ENCODE measurements at regions of chr12 and their contacts with region 1.

Region 1: DNA sequence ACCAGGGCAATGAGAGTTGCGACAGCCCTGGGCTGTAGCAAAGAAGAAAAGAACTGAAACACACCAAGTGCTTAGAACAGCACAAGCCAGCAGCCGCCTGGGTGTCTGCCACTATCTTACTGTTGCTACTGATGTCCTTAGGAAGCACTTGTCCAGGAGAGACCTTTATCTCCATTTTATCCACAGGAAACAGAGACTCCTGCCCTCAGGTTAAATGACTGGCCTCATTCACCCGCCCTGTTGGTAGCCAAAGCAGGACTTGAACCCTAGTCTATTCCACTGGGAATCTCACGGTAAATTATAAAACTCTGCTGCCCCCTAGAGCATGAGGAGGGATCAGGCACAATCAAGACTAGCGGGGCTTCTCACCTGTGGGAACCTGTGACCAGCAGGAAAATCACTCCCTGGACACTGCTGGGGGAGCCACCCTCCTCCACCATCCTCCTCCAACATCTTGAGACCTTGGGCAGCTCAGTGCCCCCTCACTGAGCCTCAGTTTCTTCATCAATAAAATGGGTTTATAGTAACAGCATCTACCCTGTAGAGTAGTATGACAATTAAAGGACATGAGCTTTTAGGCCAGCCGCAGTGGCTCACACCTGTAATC is 20.5 kb upstream of the TESC start:
- DNase-seq: no peak
- H3K4me3 ChIP-seq: no peak overlapping the region
- H3K27ac ChIP-seq: peak overlapping the region in 1 of 4 donors; percentile 39
- H3K4me1 ChIP-seq: peaks cover 15 to 23% (median 20%) of the 10 kb centered on the region in 4 donors
- H3K27me3 ChIP-seq: peaks cover 0 to 9% (median 0%) of the 10 kb centered on the region in 4 donors
- CTCF ChIP-seq: peak; percentile 66 to 67 (median 66)
- EP300 ChIP-seq: no peak
- POLR2A ChIP-seq: no peak

Region 2: DNA sequence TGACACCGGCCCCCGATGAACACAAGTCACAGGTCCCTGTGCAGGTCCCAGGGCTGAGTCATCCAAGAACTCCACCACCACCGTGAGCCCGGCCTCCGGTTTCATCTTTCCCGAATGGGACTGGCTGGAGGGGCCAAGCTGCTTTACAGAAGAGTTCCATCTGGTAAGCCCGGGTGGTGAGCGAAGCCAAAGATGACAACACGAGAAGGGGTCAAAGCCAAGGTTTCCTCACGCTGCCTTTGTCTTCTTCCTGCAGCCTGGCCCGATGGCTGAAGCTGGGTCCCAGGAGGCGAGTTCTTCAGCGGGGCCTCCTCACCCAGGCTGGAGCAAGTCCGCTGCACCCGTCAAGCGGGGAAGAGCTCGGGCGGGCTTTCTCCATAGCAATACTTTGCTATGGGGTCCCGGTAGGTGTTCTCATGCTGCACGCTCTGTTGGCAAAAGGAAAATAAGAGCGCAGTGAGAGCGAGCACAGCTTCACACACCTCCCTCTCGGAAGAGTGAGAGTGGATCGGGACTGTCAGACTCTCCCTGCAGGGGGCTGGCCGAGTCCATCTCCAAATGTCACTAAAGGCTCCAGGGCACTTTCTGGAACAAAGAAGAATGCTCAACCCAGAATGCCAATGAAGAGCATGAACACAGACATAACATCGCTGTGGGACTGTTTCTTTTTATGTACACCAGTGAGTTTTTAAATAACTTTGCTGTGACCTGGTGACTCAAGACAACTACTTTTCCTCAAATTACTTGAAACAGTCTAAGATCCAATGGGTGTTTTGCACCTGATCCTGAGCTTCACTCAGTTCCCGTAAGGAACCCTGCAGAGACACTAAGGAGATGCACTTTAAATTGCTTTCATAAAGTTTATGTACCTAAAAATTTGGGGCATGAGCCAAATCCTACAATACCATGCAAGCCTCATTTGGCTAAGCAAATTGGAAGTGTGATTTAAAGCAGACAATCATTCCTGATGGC is 401.9 kb before region 1 on chr12:
- intact Hi-C with region 1: loop called (anchors 10 kb)
- DNase-seq: peak; percentile 94
- H3K4me3 ChIP-seq: peak overlapping the region in 3 of 4 donors; percentile 21 to 35 (median 27)
- H3K27ac ChIP-seq: peak overlapping the region; percentile 29 to 75 (median 49)
- H3K4me1 ChIP-seq: peaks cover 24 to 36% (median 29%) of the 10 kb centered on the region in 4 donors
- H3K27me3 ChIP-seq: no peaks in the 10 kb centered on the region
- CTCF ChIP-seq: no peak
- EP300 ChIP-seq: no peak
- POLR2A ChIP-seq: no peak

Region 3: DNA sequence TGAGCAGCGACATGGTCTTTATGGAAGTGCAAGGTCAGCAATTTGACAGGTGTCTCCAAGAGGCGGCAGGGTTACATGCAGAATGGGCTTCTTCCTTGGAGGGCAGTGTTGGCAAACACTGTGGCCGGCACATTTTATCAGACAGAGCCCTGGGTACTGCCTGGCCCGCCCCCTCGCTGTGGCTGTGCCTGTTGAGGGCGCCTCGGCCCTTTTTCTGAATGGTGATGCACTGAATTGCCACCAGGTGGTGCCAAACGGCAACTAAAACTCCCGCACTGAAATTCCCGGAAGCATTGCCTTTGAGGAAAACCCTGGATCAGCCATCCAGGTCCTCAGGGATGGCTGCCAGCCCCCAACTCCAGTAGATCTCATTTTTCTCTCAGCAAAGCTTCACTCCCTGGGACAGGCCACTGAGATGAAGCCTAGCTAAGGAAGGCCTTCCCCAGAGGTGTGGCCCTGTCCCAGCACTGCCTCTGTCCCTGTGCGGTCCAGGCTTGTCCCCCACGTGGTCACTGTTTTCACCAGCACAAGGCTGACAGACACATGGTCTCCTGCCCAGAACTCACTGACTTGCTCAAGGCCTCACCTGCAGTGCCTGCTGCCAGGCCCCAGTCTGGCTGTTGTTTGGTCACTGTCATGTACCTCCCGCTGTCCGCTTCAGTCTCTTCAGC is 94.1 kb before region 1 on chr12:
- intact Hi-C with region 1: loop called (anchors 1 kb)
- DNase-seq: no peak
- H3K4me3 ChIP-seq: no peak overlapping the region
- H3K27ac ChIP-seq: peak overlapping the region in 1 of 4 donors; percentile 71
- H3K4me1 ChIP-seq: peaks cover 4 to 12% (median 9%) of the 10 kb centered on the region in 4 donors
- H3K27me3 ChIP-seq: no peaks in the 10 kb centered on the region
- CTCF ChIP-seq: peak; percentile 92 to 96 (median 93)
- EP300 ChIP-seq: no peak
- POLR2A ChIP-seq: no peak

Region 4: DNA sequence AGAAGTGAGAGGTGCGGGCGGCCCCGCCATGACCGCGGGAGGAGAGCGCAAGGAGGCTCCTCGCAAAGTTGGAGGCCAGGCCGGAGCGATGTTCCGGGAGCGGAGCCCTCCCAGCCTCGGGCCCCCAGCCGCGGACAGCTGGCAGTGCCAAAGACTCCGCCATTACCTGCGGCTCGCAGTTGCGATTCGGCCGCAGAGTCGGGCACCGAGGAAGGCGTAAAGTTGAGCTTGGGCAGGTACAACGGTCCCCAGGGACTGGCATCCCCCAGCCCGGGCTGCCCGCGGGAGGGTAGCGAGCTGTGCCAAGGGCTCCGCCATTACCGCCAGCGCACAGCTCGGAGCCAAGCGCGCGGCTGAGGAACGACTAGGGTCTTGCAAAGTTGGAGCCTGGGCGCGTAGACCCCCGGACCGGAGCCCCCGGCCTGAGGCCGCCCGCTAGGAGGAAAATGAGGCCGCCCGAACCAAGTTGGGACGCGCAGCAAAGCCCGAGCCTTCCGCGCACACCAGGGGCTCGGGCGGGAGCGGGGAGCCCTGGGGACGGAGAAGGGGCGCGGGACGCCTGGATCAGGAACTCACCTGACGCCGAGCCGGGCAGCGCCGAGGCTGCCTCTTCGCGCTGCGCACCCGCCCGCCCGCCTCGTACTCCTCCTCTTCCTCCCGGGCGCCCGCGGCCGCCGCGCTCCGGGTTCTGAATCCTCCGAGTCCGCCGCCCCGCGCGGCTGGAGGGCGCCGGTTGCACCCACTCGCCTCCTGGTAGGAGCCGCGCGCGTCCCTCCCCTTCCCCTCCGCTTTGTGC is 241.1 kb after region 1 on chr12:
- intact Hi-C with region 1: no loop called
- DNase-seq: no peak
- H3K4me3 ChIP-seq: peak overlapping the region in 2 of 4 donors; percentile 18 to 19
- H3K27ac ChIP-seq: no peak overlapping the region
- H3K4me1 ChIP-seq: peaks cover 0 to 12% (median 6%) of the 10 kb centered on the region in 4 donors
- H3K27me3 ChIP-seq: peaks cover 0 to 93% (median 27%) of the 10 kb centered on the region in 4 donors
- CTCF ChIP-seq: no peak
- EP300 ChIP-seq: no peak
- POLR2A ChIP-seq: no peak

Measured in esophagus muscularis mucosa (tissue), 4 donors.